Dendritic cell treated with granulocyte-macrophage colony-stimulating factor and Interleukin-4, amounts not matched to agents 40 ng/mL and 50 ng/mL, for 4 days (primary cell): ENCODE measurements at regions of chr7 and their contacts with region 1.

Region 1: DNA sequence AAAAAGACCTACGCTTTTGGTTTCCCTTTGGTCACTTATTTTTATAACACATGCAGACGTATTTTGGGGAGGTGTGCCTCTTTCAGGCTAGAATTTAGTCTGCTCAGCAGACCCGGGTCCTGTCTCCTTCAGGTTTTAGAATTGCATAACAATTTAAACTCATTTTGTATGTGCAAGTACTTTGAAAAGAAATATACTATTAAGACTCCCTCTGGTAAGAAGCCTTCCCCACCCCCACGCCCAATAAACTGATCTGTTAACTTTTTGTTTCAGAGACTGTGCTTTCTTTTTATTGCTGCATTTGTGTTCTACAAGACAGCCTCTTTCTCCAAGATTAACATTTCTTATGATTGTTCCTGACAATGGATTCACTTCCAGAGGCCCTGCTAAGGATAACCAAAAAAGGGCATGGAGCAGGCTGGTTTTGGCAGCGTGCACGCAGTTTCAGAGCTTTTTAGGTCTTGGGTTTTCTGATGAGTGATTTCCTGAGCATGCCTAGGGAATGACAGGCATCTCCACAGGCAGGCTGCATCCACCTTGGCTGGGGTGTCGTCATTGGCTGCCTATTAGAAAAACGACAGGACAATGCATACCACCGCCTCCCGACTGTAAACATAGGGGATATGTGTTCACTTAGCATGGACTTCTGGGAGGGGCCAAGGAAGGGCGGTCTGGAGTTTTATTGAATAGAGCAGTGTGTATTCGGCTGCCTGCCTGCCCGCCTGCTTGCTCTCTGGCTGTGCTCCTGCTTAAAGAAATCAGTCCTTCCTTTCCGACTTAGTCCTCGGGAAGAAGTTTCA is at the start of gene CALD1:
- H3K4me3 Mint-ChIP-seq: no peak within 1 kb of the TSS
- H3K27ac Mint-ChIP-seq: no peak within 1 kb of the TSS
- H3K4me1 Mint-ChIP-seq: no peaks in the 10 kb centered on the region
- H3K27me3 Mint-ChIP-seq: peaks cover 14% of the 10 kb centered on the region

Region 2: GRCh38 chr7:134905375-134905774 is 126.2 kb after region 1 on chr7:
- intact Hi-C with region 1: loop called (anchors 10 kb)
- H3K4me3 Mint-ChIP-seq: no peak overlapping the region
- H3K27ac Mint-ChIP-seq: no peak overlapping the region
- H3K4me1 Mint-ChIP-seq: peaks cover 5% of the 10 kb centered on the region
- H3K27me3 Mint-ChIP-seq: no peaks in the 10 kb centered on the region